A673 (cell line): ENCODE measurements at regions of chr1 and their contacts with region 1.

Region 1: DNA sequence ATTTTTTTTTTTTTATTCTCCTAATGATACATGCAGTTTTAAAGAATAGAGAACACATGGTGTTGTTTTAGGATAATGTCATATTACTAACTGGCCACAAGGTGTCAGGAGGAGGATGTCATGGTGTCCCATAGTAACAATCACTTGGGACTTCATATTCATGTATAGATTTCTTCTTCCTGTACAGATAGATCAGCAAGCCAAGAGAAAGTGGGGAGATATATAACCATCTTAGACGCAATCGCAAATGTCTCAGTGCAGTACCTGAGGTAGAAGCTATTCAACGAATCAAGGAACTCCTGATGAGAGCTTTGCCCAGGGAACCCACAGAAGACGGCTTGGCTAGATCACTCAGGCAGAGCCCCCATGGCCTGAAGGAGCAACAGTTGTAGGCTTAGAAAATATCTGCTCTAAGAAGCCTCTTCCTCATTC is 12.3 kb downstream of the OR2T11 start:
- DNase-seq: peak; percentile 74
- H3K4me3 ChIP-seq: no peak overlapping the region
- H3K27ac ChIP-seq: no peak overlapping the region
- H3K4me1 ChIP-seq: peaks cover 21% of the 10 kb centered on the region
- H3K27me3 ChIP-seq: no peaks in the 10 kb centered on the region
- CTCF ChIP-seq: peak; percentile 70

Region 2: GRCh38 chr1:248243204-248243603 is 379.4 kb before region 1 on chr1:
- CTCF ChIA-PET with region 1: no interaction called
- POLR2A ChIA-PET with region 1: no interaction called
- intact Hi-C with region 1: loop called (anchors 10 kb)
- DNase-seq: peak; percentile 61
- H3K4me3 ChIP-seq: no peak overlapping the region
- H3K27ac ChIP-seq: no peak overlapping the region
- H3K4me1 ChIP-seq: no peaks in the 10 kb centered on the region
- H3K27me3 ChIP-seq: no peaks in the 10 kb centered on the region
- CTCF ChIP-seq: peak; percentile 84

Region 3: GRCh38 chr1:248686815-248687214 is 64.2 kb after region 1 on chr1:
- CTCF ChIA-PET with region 1: no interaction called
- POLR2A ChIA-PET with region 1: no interaction called
- intact Hi-C with region 1: loop called (anchors 2 kb)
- DNase-seq: peak; percentile 55
- H3K4me3 ChIP-seq: no peak overlapping the region
- H3K27ac ChIP-seq: no peak overlapping the region
- H3K4me1 ChIP-seq: no peaks in the 10 kb centered on the region
- H3K27me3 ChIP-seq: peaks cover 18% of the 10 kb centered on the region
- CTCF ChIP-seq: peak; percentile 48

Region 4: DNA sequence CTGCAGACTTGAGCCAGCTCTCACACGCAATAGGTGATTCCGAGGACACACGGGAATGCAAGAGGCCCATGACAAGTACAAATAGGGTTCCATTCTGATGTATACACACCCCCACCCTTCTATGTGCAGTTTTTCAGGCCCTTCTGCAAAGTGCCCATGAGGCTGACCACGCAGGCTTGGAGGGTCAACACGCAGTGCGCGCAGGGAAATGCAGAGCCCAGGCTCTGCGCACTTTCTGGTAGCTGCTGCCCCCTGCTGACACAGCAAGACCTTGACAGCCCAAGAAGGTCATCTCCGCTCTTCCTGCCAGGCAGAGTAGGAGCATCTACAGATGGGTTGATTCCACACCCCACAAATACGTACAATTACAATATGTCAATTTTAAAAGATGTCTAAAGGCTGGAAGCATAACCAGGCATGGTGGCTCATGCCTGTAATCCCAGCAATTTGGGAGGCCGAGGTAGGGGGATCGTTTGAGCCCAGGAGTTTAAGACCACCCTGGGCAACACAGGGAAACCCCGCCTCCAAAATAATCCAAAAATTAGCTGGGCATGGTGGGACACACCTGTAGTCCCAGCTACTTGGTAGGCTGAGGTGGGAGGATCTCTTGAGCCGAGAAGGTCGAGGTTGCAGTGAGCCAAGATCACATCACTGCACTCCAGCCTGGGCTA is 184.6 kb after region 1 on chr1:
- CTCF ChIA-PET with region 1: interaction called, 5 read pairs
- POLR2A ChIA-PET with region 1: no interaction called
- intact Hi-C with region 1: loop called (anchors 1 kb)
- DNase-seq: peak; percentile 52
- H3K4me3 ChIP-seq: no peak overlapping the region
- H3K27ac ChIP-seq: no peak overlapping the region
- H3K4me1 ChIP-seq: no peaks in the 10 kb centered on the region
- H3K27me3 ChIP-seq: peaks cover 3% of the 10 kb centered on the region
- CTCF ChIP-seq: peak; percentile 81